ENCODE measurements at regions of chr6 and their contacts with region 1.

Region 1: GRCh38 chr6:158704181-158704822 is 54.4 kb downstream of the SYTL3 start:
- DNase-seq: peak; percentile 64
- H3K4me3 ChIP-seq: peak overlapping the region; percentile 35 to 54 (median 47)
- H3K27ac ChIP-seq: no peak overlapping the region
- H3K4me1 ChIP-seq: peaks cover 32% of the 10 kb centered on the region
- H3K27me3 ChIP-seq: no peaks in the 10 kb centered on the region
- CTCF ChIP-seq: peak; percentile 80 to 99

Region 2: GRCh38 chr6:158743033-158743651 is 38.8 kb after region 1 on chr6:
- CTCF ChIA-PET with region 1: no interaction called
- dilution Hi-C with region 1: no loop called
- in situ Hi-C with region 1: no loop called
- intact Hi-C with region 1: loop called (anchors 2 kb)
- DNase-seq: peak; percentile 77
- H3K4me3 ChIP-seq: no peak overlapping the region
- H3K27ac ChIP-seq: no peak overlapping the region
- H3K4me1 ChIP-seq: peaks cover 23% of the 10 kb centered on the region
- H3K27me3 ChIP-seq: no peaks in the 10 kb centered on the region
- CTCF ChIP-seq: no peak

Region 3: DNA sequence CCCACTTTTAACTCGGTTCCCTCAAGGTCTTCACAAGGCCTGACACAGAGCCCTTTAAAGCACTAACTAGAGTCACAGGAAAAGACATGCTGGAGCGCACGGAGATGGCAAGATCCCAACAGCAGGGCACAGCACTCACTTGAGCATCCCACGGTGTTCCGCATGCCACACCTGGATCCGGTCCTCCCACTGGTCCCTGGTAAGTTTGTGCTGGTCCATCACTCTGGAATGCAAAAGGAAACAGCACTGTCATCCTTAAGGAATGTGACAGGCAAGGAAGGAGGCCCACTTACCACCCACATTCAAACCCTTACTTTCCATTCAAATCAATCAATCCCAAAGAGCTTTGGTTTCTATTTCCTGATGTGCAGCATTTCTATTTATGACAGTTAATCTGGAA is 80.2 kb after region 1 on chr6:
- CTCF ChIA-PET with region 1: no interaction called
- dilution Hi-C with region 1: no loop called
- in situ Hi-C with region 1: no loop called
- intact Hi-C with region 1: loop called (anchors 1 kb)
- DNase-seq: peak; percentile 83
- H3K4me3 ChIP-seq: no peak overlapping the region
- H3K27ac ChIP-seq: peak overlapping the region; percentile 52
- H3K4me1 ChIP-seq: peaks cover 67% of the 10 kb centered on the region
- H3K27me3 ChIP-seq: no peaks in the 10 kb centered on the region
- CTCF ChIP-seq: no peak

Region 4: GRCh38 chr6:158808941-158809678 is 104.8 kb after region 1 on chr6:
- CTCF ChIA-PET with region 1: no interaction called
- dilution Hi-C with region 1: no loop called
- in situ Hi-C with region 1: no loop called
- intact Hi-C with region 1: loop called (anchors 2 kb)
- DNase-seq: no peak
- H3K4me3 ChIP-seq: no peak overlapping the region
- H3K27ac ChIP-seq: peak overlapping the region; percentile 19
- H3K4me1 ChIP-seq: peaks cover 58% of the 10 kb centered on the region
- H3K27me3 ChIP-seq: no peaks in the 10 kb centered on the region
- CTCF ChIP-seq: no peak

Region 5: GRCh38 chr6:158958504-158959386 is 254.4 kb after region 1 on chr6:
- CTCF ChIA-PET with region 1: no interaction called
- dilution Hi-C with region 1: no loop called
- in situ Hi-C with region 1: no loop called
- intact Hi-C with region 1: loop called (anchors 5 kb)
- DNase-seq: peak; percentile 31
- H3K4me3 ChIP-seq: no peak overlapping the region
- H3K27ac ChIP-seq: no peak overlapping the region
- H3K4me1 ChIP-seq: peaks cover 8% of the 10 kb centered on the region
- H3K27me3 ChIP-seq: no peaks in the 10 kb centered on the region
- CTCF ChIP-seq: peak in 1 of 2 donors; percentile 47

Region 6: GRCh38 chr6:158999666-159000403 is 295.5 kb after region 1 on chr6 and contains the start of gene RSPH3:
- CTCF ChIA-PET with region 1: no interaction called
- dilution Hi-C with region 1: no loop called
- in situ Hi-C with region 1: no loop called
- intact Hi-C with region 1: loop called (anchors 1 kb)
- DNase-seq: peak; percentile 97
- H3K4me3 ChIP-seq: peak within 1 kb of the TSS; percentile 42 to 94 (median 65)
- H3K27ac ChIP-seq: peak within 1 kb of the TSS; percentile 69
- H3K4me1 ChIP-seq: peaks cover 19% of the 10 kb centered on the region
- H3K27me3 ChIP-seq: no peaks in the 10 kb centered on the region
- CTCF ChIP-seq: peak in 1 of 2 donors; percentile 37
- total RNA-seq, gene RSPH3: 12.2 to 15.6 TPM

Region 7: DNA sequence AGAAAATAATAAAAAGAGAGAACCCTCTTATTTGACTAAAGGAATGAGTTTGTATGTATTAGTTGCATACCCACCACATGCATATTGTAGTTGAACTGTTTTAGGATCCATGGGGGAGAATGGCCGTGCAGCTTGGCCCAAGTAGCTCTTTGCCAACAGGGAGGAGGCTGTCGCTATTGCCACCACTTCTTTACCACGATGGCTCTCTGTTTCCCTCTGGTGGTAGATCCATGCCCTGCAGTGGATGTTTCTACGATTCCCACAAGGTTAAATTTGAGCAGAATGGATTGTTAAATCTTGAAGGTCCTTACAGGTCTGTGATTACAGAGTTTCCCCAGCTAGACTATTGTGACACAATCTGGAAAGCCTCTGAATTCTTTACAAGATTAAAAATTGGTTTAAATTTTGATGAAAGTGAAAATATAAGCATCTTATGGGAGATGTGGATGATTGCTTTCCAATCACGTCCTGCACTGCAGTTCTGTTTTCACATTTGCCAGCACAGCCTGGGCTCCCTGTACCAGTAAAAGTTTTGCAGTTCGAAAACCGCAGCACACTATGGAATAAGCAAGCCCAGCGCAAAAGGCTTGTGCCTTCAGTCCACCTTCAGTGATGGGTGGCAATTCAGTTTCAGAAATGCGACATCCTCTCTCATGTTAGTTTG is 430.5 kb after region 1 on chr6:
- CTCF ChIA-PET with region 1: no interaction called
- dilution Hi-C with region 1: no loop called
- in situ Hi-C with region 1: no loop called
- intact Hi-C with region 1: loop called (anchors 1 kb)
- DNase-seq: peak; percentile 36
- H3K4me3 ChIP-seq: no peak overlapping the region
- H3K27ac ChIP-seq: no peak overlapping the region
- H3K4me1 ChIP-seq: no peaks in the 10 kb centered on the region
- H3K27me3 ChIP-seq: no peaks in the 10 kb centered on the region
- CTCF ChIP-seq: peak; percentile 98 to 99

Measured in mammary epithelial cell (primary cell).